ENCODE measurements at regions of chr17 and their contacts with region 1.

Region 1: GRCh38 chr17:49739641-49740271 is 24.2 kb downstream of the FAM117A start:
- DNase-seq: peak; percentile 96
- H3K4me3 Mint-ChIP-seq: peak overlapping the region; percentile 87
- H3K27ac Mint-ChIP-seq: peak overlapping the region; percentile 99
- H3K4me1 Mint-ChIP-seq: peaks cover 66% of the 10 kb centered on the region
- H3K27me3 Mint-ChIP-seq: no peaks in the 10 kb centered on the region

Region 2: DNA sequence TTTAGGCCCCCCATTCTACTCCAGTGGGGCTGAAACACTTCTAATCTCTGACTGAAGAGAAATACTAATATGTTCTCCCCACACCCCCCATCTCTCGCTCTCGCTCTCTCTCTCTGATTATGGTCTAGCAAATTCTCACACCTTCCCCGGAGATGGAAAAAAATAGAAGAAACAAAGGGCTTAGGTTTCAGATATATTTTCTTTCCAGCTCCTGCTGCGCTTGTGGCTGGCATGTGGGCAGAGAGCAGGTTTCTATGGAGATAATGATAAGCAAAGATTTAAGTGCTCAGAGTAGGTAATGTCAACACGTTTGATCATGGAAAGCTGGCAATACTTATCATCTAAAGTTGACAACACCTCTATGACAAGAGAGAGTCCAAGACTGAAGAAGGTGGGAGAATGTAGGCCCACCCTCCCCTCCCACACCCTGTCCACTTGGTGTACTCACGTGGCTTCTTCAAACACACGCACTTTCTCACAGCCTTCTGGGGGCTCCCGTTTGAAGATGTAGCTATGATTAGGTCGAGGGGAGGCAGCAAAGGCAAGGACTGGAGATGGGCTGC is 24.0 kb before region 1 on chr17:
- intact Hi-C with region 1: loop called (anchors 2 kb)
- DNase-seq: no peak
- H3K4me3 Mint-ChIP-seq: peak overlapping the region; percentile 43
- H3K27ac Mint-ChIP-seq: peak overlapping the region; percentile 88
- H3K4me1 Mint-ChIP-seq: peaks cover 26% of the 10 kb centered on the region
- H3K27me3 Mint-ChIP-seq: no peaks in the 10 kb centered on the region

Measured in activated CD4-positive, alpha-beta T cell treated with anti-CD3 and anti-CD28 coated beads, Interleukin-2, amount 10 ng/mL, durations not matched to agents 24 days and 14 days (primary cell).